MCF 10A (cell line): ENCODE measurements at regions of chr6 and their contacts with region 1.

Region 1: DNA sequence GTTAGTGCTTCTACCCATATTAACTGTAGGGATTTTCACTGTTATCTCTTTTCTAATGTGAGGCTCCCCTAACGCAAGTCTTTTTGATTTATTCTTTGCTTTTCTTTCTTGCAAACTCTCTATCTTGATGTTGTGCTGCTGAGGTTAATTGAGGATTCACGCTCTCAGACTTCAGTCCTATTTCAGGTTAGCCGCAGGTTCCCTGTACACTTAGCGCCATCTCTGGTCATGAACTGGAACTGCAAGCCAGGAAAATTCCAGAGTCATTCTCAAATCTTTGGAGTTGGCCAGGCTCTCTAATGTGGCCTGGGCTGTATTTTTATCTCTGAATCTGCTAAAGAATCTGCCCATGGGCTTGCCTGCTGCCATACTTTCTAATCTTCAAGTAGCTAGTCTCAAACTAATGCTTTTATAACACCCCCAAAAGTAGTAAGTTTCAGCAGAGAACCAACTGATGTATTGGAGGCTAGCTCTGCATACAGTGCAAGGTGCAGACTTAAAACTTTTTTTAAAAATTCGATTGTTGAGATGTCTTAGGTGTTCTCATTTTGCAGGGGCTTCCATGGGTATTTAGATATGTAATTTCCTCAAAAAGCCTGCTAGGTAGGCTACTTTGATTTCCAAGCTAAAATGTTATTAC is 91.1 kb upstream of the OPRM1 start:
- DNase-seq: peak; percentile 52
- H3K4me3 Mint-ChIP-seq: no peak overlapping the region
- H3K27ac Mint-ChIP-seq: no peak overlapping the region
- H3K4me1 Mint-ChIP-seq: peaks cover 6% of the 10 kb centered on the region
- H3K27me3 Mint-ChIP-seq: no peaks in the 10 kb centered on the region
- CTCF ChIP-seq: peak; percentile 84

Region 2: DNA sequence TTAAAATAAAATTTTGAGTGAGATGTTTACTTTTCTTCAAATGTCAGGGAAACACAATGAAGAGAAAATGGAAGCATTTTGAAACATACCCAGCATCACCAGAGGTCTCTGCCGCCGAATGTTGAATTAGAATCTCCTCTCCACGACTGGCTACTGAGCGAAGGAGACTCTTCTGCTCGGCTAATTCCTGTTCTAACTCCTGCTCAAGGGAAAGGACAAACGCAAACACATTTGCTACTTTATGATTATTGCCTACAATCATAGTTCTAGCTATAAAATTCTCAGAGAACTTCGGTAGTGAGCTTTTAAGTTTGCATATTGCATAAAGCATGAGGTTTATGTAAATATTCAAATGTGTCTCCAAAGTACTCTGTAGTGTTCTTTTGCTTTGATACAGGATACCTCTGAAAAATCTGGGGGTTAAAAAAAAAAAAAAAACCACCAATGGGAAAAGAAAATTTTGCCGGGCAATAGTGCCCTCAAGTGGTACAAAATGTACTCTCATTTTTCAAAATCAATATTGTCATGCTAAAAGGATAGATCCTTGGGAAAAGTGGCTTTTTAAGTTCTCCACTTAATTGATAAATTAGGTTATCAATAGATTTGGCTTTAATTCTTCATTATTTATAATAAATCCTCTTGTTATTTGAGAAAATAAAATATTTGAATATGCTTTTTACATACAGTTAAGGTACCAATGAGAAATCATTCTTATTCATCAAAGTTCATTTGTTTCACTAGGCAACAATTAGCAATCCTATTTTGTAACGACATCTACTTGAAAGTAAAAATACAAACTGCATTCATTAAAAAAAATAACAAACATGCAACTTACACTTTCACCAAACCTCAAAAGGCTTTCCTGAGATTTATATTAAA is 1679.7 kb before region 1 on chr6:
- CTCF ChIA-PET with region 1: no interaction called
- POLR2A ChIA-PET with region 1: no interaction called
- intact Hi-C with region 1: no loop called
- DNase-seq: peak; percentile 41
- H3K4me3 Mint-ChIP-seq: no peak overlapping the region
- H3K27ac Mint-ChIP-seq: no peak overlapping the region
- H3K4me1 Mint-ChIP-seq: peaks cover 20% of the 10 kb centered on the region
- H3K27me3 Mint-ChIP-seq: no peaks in the 10 kb centered on the region
- CTCF ChIP-seq: peak; percentile 45

Region 3: DNA sequence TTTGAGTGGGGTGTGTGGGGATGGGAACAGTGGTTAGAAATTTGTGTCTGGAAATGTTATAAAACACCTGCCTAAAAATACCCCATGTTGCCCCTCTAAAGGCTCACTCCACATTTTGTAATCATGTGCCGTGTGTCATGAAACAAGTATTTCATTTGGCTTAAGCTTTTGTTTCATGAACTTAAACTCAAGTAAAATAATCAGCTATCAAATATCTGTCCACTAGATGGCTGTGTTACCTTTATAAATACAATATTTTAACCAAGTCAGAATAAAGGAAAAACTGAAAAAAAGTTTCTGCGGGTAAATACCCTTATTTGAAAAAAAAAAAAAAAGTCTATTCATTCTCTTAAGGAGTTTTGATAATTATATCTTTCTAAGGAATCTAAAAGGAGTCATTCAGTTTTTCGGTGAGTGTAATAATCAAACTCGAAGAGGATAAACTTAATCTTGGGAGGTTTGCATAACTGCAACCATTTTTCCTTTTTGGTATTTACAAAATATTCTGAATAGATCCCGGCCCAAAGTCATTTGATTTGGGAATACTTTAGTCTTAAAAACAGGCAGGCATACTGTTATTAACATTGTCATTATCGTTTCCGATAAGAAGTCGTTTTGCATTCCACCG is 915.6 kb before region 1 on chr6:
- CTCF ChIA-PET with region 1: interaction called, 7 read pairs
- POLR2A ChIA-PET with region 1: no interaction called
- intact Hi-C with region 1: loop called (anchors 2 kb)
- DNase-seq: peak; percentile 46
- H3K4me3 Mint-ChIP-seq: no peak overlapping the region
- H3K27ac Mint-ChIP-seq: no peak overlapping the region
- H3K4me1 Mint-ChIP-seq: peaks cover 20% of the 10 kb centered on the region
- H3K27me3 Mint-ChIP-seq: no peaks in the 10 kb centered on the region
- CTCF ChIP-seq: peak; percentile 43

Region 4: GRCh38 chr6:153312641-153313040 is 635.3 kb before region 1 on chr6:
- CTCF ChIA-PET with region 1: no interaction called
- POLR2A ChIA-PET with region 1: no interaction called
- intact Hi-C with region 1: loop called (anchors 2 kb)
- DNase-seq: peak; percentile 87
- H3K4me3 Mint-ChIP-seq: no peak overlapping the region
- H3K27ac Mint-ChIP-seq: no peak overlapping the region
- H3K4me1 Mint-ChIP-seq: no peaks in the 10 kb centered on the region
- H3K27me3 Mint-ChIP-seq: no peaks in the 10 kb centered on the region
- CTCF ChIP-seq: peak; percentile 28

Region 5: DNA sequence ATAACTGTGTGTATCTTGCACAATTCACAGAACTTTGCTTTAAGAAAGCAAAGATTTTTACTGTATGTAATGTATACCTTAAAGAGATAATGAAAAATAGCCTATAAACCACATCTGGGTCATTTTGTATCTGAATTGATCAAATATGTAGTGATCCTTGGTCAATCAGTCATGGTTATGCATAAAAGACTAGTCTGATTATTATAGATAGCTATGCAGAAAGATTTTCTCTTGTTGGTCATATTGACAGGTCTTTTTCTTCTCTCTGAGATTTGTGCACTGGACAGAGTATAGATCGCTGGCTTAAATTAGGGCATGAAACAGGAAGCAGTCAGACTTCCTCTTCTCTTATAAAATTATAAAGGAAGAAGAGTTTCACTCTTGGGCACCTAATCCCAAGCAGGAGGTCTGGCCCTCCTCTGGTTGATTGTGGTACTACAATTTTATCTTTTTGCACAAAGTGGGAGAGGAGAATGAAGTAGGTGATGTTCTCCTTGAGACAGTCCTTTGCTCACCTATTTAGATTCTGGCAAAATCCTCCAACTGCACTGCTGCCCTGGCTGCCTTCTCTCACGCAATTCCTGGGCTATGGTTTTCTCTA is 435.9 kb before region 1 on chr6:
- CTCF ChIA-PET with region 1: interaction called, 3 read pairs
- POLR2A ChIA-PET with region 1: no interaction called
- intact Hi-C with region 1: loop called (anchors 1 kb)
- DNase-seq: peak; percentile 67
- H3K4me3 Mint-ChIP-seq: no peak overlapping the region
- H3K27ac Mint-ChIP-seq: peak overlapping the region; percentile 35
- H3K4me1 Mint-ChIP-seq: no peaks in the 10 kb centered on the region
- H3K27me3 Mint-ChIP-seq: no peaks in the 10 kb centered on the region
- CTCF ChIP-seq: peak; percentile 62

Region 6: DNA sequence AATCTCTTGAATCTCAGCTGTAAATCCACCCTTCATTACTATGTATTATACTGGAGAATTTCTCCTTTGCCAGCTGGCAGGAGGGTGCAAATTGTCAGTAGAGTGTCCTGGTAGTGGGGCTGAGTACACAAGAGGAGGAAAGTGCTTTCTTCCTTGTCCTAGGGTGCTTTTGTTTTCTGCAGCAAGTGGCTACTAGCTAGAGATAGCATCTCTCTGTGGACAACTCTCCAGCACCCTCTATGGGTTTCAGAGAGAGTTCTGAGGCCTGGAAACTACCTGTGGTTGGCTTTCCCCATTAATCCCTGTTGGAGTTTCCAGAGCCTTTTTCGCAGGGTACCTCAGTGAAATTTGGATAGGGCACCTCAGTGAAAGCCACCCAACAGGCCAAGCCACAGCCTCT is 394.3 kb before region 1 on chr6:
- CTCF ChIA-PET with region 1: interaction called, 3 read pairs
- POLR2A ChIA-PET with region 1: interaction called, 3 read pairs
- intact Hi-C with region 1: loop called (anchors 5 kb)
- DNase-seq: peak; percentile 56
- H3K4me3 Mint-ChIP-seq: no peak overlapping the region
- H3K27ac Mint-ChIP-seq: no peak overlapping the region
- H3K4me1 Mint-ChIP-seq: no peaks in the 10 kb centered on the region
- H3K27me3 Mint-ChIP-seq: no peaks in the 10 kb centered on the region
- CTCF ChIP-seq: peak; percentile 48

Region 7: GRCh38 chr6:153595903-153596302 is 352.0 kb before region 1 on chr6:
- CTCF ChIA-PET with region 1: no interaction called
- POLR2A ChIA-PET with region 1: no interaction called
- intact Hi-C with region 1: no loop called
- DNase-seq: peak; percentile 83
- H3K4me3 Mint-ChIP-seq: no peak overlapping the region
- H3K27ac Mint-ChIP-seq: no peak overlapping the region
- H3K4me1 Mint-ChIP-seq: peaks cover 26% of the 10 kb centered on the region
- H3K27me3 Mint-ChIP-seq: no peaks in the 10 kb centered on the region
- CTCF ChIP-seq: no peak

Region 8: GRCh38 chr6:153720732-153721131 is 227.2 kb before region 1 on chr6:
- CTCF ChIA-PET with region 1: no interaction called
- POLR2A ChIA-PET with region 1: no interaction called
- intact Hi-C with region 1: loop called (anchors 10 kb)
- DNase-seq: no peak
- H3K4me3 Mint-ChIP-seq: no peak overlapping the region
- H3K27ac Mint-ChIP-seq: no peak overlapping the region
- H3K4me1 Mint-ChIP-seq: no peaks in the 10 kb centered on the region
- H3K27me3 Mint-ChIP-seq: peaks cover 12% of the 10 kb centered on the region
- CTCF ChIP-seq: no peak

Region 9: GRCh38 chr6:153927867-153928266 is 20.1 kb before region 1 on chr6:
- CTCF ChIA-PET with region 1: no interaction called
- POLR2A ChIA-PET with region 1: no interaction called
- intact Hi-C with region 1: no loop called
- DNase-seq: no peak
- H3K4me3 Mint-ChIP-seq: no peak overlapping the region
- H3K27ac Mint-ChIP-seq: no peak overlapping the region
- H3K4me1 Mint-ChIP-seq: peaks cover 16% of the 10 kb centered on the region
- H3K27me3 Mint-ChIP-seq: no peaks in the 10 kb centered on the region
- CTCF ChIP-seq: no peak